Left colon (tissue), 2 donors: ENCODE measurements at regions of chr10 and their contacts with region 1.

Region 1: GRCh38 chr10:59906417-59907202 is at the start of gene CCDC6:
- DNase-seq: peak; percentile 94 to 96
- ATAC-seq: peak; percentile 83
- total RNA-seq, gene CCDC6: 54.9 to 60.7 TPM

Region 2: GRCh38 chr10:59830601-59831259 is 75.9 kb before region 1 on chr10:
- intact Hi-C with region 1: loop called in 1 of 2 experiments (anchors 10 kb)
- DNase-seq: peak in 1 of 2 donors; percentile 54
- ATAC-seq: peak; percentile 65

Region 3: DNA sequence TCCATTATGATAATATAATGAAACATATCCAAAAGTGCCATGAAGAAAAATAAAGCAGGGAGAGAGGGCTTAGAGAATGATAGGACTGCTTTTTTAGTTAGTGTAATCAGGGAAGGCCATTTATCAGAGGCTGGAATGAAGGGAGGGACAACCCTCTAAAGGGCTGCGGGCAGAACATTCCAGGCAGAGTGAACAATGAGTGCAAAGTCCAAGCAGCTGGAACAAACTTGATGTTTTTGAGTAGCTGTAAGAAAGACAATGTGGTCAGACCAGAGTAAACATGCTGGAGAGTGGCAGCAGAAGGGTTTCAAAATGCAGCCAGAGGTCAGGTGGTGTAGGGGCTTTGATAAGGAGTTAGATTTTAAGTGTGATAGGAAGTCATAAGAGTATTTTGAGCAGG is 65.3 kb after region 1 on chr10:
- intact Hi-C with region 1: no loop called
- DNase-seq: peak; percentile 32 to 69
- ATAC-seq: peak; percentile 98

Region 4: DNA sequence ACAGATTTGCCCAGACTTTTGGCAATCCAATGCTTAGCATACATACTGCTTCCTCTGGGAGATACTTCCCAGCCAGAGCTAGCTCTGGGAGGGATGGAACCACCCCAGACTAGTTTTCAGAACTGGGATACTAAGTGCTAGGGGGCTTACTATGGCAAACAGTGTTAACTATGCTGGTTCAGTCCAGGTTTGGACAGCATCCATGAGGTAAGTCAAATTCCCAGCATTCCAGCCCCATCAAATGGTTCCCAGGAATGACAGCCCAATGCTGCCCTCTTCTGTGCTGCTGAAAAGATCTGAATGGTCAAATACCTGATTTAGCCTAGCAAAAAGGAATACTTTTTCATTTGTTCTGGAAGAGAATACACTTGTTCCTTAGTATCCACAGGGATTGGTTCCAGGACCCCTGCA is 141.5 kb after region 1 on chr10:
- intact Hi-C with region 1: loop called in 1 of 2 experiments (anchors 10 kb)
- DNase-seq: no peak
- ATAC-seq: peak; percentile 51